ENCODE measurements at regions of chr4 and their contacts with region 1.

Region 1: GRCh38 chr4:182925298-182925738 is 8.1 kb upstream of the DCTD start:
- H3K4me3 Mint-ChIP-seq: no peak overlapping the region
- H3K27ac Mint-ChIP-seq: no peak overlapping the region
- H3K4me1 Mint-ChIP-seq: no peaks in the 10 kb centered on the region
- H3K27me3 Mint-ChIP-seq: peaks cover 11% of the 10 kb centered on the region

Region 2: DNA sequence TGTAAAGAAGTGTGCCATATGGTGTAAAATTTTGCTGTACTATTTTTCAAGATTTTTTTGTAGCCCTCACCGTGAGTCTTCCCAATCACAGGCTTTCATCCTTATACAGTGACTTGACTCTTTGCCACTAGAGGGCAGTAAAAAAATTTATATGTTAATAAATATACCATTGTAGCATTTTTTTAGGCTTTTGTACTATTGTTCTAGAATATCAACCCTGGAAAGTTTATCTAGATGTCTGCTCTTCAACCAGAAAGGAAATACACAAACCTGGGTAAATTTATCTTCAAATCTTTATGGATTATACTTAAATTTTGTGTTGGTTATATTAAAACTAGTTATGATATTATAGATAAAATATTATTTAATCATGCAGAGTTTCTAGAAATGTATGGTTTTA is 446.8 kb before region 1 on chr4:
- intact Hi-C with region 1: loop called (anchors 2 kb)
- H3K4me3 Mint-ChIP-seq: no peak overlapping the region
- H3K27ac Mint-ChIP-seq: no peak overlapping the region
- H3K4me1 Mint-ChIP-seq: no peaks in the 10 kb centered on the region
- H3K27me3 Mint-ChIP-seq: no peaks in the 10 kb centered on the region

Region 3: DNA sequence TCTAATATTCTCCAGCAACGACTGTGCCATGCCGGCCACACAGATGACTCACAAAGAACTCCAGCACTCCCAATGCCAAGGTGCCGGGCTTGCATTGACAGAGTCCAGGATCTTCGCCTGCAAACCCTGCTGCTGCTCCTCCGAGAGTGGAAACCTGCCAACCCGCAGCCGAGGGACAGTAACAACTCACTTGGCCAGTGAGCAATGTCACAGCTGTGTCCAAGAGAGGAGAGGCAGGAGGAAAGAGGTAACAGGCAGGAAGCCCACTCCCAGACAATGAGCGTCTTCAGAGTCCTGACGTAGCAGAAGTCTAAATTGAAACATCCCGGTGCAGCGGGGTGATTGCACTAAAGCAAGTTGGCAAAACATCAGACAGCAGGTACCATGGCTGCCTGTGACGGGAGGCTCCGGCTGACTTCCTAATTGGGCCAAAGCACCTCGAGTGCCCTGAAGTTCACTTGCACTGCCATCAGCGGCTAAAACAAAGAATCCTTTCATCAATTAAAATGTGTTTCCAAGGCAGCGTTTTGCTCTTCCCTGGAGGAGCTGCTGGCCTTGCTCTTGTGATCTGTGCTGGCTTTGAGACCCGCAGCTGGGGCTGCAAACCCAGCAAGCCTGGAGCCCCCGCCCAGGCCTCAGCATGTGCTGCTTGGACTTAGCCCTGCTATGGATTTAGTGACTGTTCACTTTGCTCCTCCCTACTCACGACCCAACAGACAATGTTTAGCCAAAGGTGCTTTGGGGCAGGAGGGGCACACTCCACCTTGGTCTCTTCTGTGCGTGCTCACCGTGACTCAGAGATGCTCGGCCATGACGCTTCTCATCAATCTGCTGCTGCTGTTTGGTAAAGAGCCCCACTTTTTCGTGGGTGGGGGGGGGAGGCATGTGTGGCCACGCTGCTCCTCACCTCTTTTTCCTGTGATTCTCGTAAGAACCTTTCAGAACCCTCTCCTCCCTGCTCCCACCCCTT is 44.6 kb before region 1 on chr4:
- intact Hi-C with region 1: no loop called
- H3K4me3 Mint-ChIP-seq: no peak overlapping the region
- H3K27ac Mint-ChIP-seq: no peak overlapping the region
- H3K4me1 Mint-ChIP-seq: no peaks in the 10 kb centered on the region
- H3K27me3 Mint-ChIP-seq: no peaks in the 10 kb centered on the region